Naive thymus-derived CD4-positive, alpha-beta T cell (primary cell): ENCODE measurements at regions of chr12 and their contacts with region 1.

Region 1: GRCh38 chr12:65169320-65170208 is at the start of gene LEMD3:
- DNase-seq: peak; percentile 87 to 97 (median 94)
- ATAC-seq: peak; percentile 95
- H3K4me3 ChIP-seq: peak within 1 kb of the TSS; percentile 84
- H3K4me3 Mint-ChIP-seq: peak within 1 kb of the TSS in 8 of 10 donors; percentile 92 to 100 (median 99)
- H3K27ac ChIP-seq: peak within 1 kb of the TSS; percentile 93
- H3K27ac Mint-ChIP-seq: peak within 1 kb of the TSS; percentile 94 to 100 (median 99)
- H3K4me1 ChIP-seq: peaks cover 33 to 40% of the 10 kb centered on the region in 2 donors
- H3K4me1 Mint-ChIP-seq: peaks cover 10 to 35% (median 23%) of the 10 kb centered on the region in 7 donors
- H3K27me3 ChIP-seq: no peaks in the 10 kb centered on the region
- H3K27me3 Mint-ChIP-seq: peaks cover 0 to 5% (median 2%) of the 10 kb centered on the region in 5 donors
- total RNA-seq, gene LEMD3: 37.8 to 60.1 (median 52.8) TPM

Region 2: DNA sequence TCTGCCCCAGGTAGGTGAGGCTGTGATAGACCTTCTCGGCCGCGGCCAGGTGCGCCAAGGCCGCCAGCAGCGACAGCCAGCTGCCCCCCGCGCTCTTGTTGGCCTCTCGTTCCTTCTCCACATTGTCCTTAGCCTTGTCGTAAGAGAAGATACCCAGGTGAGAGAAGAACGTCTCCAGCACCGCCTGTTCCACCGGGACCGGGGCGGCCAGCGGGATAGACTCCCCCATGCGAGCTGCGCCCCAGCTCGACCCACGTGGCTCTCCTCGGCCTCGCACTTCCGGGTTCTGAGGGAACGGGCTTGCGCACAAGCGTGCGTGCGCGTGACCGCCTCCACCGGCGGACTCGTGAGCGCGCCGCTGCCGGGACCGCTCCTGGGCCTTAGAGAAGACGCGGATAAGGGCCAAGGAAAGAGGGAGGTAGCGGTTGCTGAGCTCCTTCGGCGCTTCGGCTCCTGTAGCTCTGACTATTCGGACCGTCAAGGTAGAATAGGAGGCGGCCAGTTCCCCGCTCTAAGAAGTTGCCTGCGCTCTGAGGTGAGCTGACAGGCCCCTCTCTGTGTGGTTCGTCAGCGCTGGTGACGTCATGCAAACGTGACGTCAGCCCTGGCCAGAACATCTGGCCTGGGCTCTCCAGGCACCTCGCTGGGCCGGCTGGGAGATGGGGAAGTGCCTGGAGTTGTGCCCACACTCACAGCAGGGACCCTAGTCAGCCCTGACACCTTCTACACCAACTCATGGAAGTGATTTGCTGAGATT is 947.4 kb before region 1 on chr12 and contains the start of gene KICS2:
- CTCF ChIA-PET with region 1: no interaction called
- POLR2A ChIA-PET with region 1: interaction called, 4 read pairs
- intact Hi-C with region 1: loop called (anchors 1 to 10 kb)
- DNase-seq: peak; percentile 89 to 95 (median 93)
- ATAC-seq: peak; percentile 96
- H3K4me3 ChIP-seq: peak within 1 kb of the TSS; percentile 87
- H3K4me3 Mint-ChIP-seq: peak within 1 kb of the TSS; percentile 86 to 100 (median 98)
- H3K27ac ChIP-seq: peak within 1 kb of the TSS; percentile 92
- H3K27ac Mint-ChIP-seq: peak within 1 kb of the TSS; percentile 94 to 100 (median 98)
- H3K4me1 ChIP-seq: peaks cover 8 to 19% of the 10 kb centered on the region in 2 donors
- H3K4me1 Mint-ChIP-seq: peaks cover 17 to 51% (median 41%) of the 10 kb centered on the region in 7 donors
- H3K27me3 ChIP-seq: no peaks in the 10 kb centered on the region
- H3K27me3 Mint-ChIP-seq: peaks cover 0 to 21% (median 8%) of the 10 kb centered on the region in 5 donors
- total RNA-seq, gene KICS2: 11.7 to 26.9 (median 19.5) TPM

Region 3: GRCh38 chr12:64669270-64669842 is 500.2 kb before region 1 on chr12:
- CTCF ChIA-PET with region 1: no interaction called
- POLR2A ChIA-PET with region 1: no interaction called
- intact Hi-C with region 1: loop called in 1 of 2 experiments (anchors 1 kb)
- DNase-seq: peak; percentile 26 to 87 (median 84)
- ATAC-seq: peak; percentile 93
- H3K4me3 ChIP-seq: peak overlapping the region; percentile 52
- H3K4me3 Mint-ChIP-seq: peak overlapping the region; percentile 85 to 98 (median 92)
- H3K27ac ChIP-seq: peak overlapping the region; percentile 72
- H3K27ac Mint-ChIP-seq: peak overlapping the region; percentile 91 to 99 (median 97)
- H3K4me1 ChIP-seq: peaks cover 89 to 90% of the 10 kb centered on the region in 2 donors
- H3K4me1 Mint-ChIP-seq: peaks cover 65 to 98% (median 90%) of the 10 kb centered on the region in 7 donors
- H3K27me3 ChIP-seq: no peaks in the 10 kb centered on the region
- H3K27me3 Mint-ChIP-seq: no peaks in the 10 kb centered on the region

Region 4: GRCh38 chr12:65074932-65075331 is 94.6 kb before region 1 on chr12:
- CTCF ChIA-PET with region 1: no interaction called
- POLR2A ChIA-PET with region 1: no interaction called
- intact Hi-C with region 1: no loop called
- DNase-seq: no peak
- ATAC-seq: no peak
- H3K4me3 ChIP-seq: no peak overlapping the region
- H3K4me3 Mint-ChIP-seq: no peak overlapping the region
- H3K27ac ChIP-seq: no peak overlapping the region
- H3K27ac Mint-ChIP-seq: no peak overlapping the region
- H3K4me1 ChIP-seq: no peaks in the 10 kb centered on the region
- H3K4me1 Mint-ChIP-seq: no peaks in the 10 kb centered on the region
- H3K27me3 ChIP-seq: no peaks in the 10 kb centered on the region
- H3K27me3 Mint-ChIP-seq: peaks cover 13 to 61% (median 30%) of the 10 kb centered on the region in 5 donors

Region 5: DNA sequence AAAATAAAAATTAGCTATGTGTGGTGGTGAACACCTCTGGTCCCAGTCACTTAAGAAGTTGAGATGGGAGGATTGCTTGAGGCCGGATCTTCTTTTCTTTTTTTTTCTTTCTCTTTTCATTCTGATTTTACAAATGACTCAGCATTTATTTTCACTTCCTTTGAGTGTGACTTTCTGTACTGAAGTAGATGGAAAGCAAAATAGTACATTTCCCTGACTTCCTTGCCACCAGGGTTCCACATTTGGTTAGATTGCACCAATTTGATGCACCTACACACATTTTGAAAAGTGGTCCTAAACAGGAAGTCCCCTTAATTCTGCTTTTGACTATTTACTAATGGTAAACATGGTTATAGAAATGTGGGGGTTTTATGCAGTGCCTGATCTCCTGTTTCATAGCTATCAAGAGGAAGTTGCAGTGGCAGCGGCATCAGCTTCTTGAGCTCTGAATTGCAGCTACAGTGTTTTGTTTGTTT is 13.2 kb before region 1 on chr12:
- CTCF ChIA-PET with region 1: no interaction called
- POLR2A ChIA-PET with region 1: interaction called, 10 read pairs
- intact Hi-C with region 1: loop called in 1 of 2 experiments (anchors 1 kb)
- DNase-seq: peak in 6 of 9 donors; percentile 14 to 43 (median 26)
- ATAC-seq: peak; percentile 49
- H3K4me3 ChIP-seq: no peak overlapping the region
- H3K4me3 Mint-ChIP-seq: peak overlapping the region in 6 of 10 donors; percentile 4 to 53 (median 36)
- H3K27ac ChIP-seq: no peak overlapping the region
- H3K27ac Mint-ChIP-seq: peak overlapping the region in 6 of 9 donors; percentile 3 to 73 (median 37)
- H3K4me1 ChIP-seq: peaks cover 0 to 10% of the 10 kb centered on the region in 2 donors
- H3K4me1 Mint-ChIP-seq: peaks cover 6 to 16% (median 11%) of the 10 kb centered on the region in 7 donors
- H3K27me3 ChIP-seq: no peaks in the 10 kb centered on the region
- H3K27me3 Mint-ChIP-seq: peaks cover 12 to 27% (median 25%) of the 10 kb centered on the region in 5 donors

Region 6: DNA sequence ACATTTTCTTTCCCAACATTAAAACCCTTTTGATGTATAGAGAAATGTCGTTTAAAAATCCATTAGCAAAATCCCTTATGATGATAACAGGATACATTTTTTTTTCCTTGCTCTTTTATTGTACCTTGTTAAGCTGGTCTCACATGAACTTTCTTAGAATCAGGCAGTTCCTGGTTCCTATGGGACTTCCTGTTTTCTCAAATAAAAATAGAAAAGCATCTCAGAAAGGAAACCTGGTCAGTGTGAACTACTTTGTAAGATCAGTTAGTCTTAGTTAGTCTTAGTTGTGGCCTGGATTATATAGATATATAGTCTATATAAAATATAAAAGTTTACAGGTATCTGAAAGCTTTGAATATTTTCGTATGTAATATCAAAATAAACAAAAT is 40.1 kb after region 1 on chr12:
- CTCF ChIA-PET with region 1: no interaction called
- POLR2A ChIA-PET with region 1: interaction called, 5 read pairs
- intact Hi-C with region 1: loop called (anchors 1 to 2 kb)
- DNase-seq: peak in 1 of 9 donors; percentile 6
- ATAC-seq: peak; percentile 52
- H3K4me3 ChIP-seq: no peak overlapping the region
- H3K4me3 Mint-ChIP-seq: peak overlapping the region; percentile 30 to 87 (median 76)
- H3K27ac ChIP-seq: no peak overlapping the region
- H3K27ac Mint-ChIP-seq: peak overlapping the region; percentile 11 to 90 (median 80)
- H3K4me1 ChIP-seq: peaks cover 15 to 21% of the 10 kb centered on the region in 2 donors
- H3K4me1 Mint-ChIP-seq: peaks cover 33 to 73% (median 54%) of the 10 kb centered on the region in 7 donors
- H3K27me3 ChIP-seq: no peaks in the 10 kb centered on the region
- H3K27me3 Mint-ChIP-seq: no peaks in the 10 kb centered on the region

Region 7: GRCh38 chr12:66130277-66131066 is 960.9 kb after region 1 on chr12 and contains the start of gene LLPH:
- CTCF ChIA-PET with region 1: no interaction called
- POLR2A ChIA-PET with region 1: interaction called, 5 read pairs
- intact Hi-C with region 1: loop called (anchors 2 to 10 kb)
- DNase-seq: peak; percentile 72 to 88 (median 86)
- ATAC-seq: peak; percentile 97
- H3K4me3 ChIP-seq: peak within 1 kb of the TSS; percentile 99
- H3K4me3 Mint-ChIP-seq: peak within 1 kb of the TSS; percentile 92 to 98 (median 97)
- H3K27ac ChIP-seq: peak within 1 kb of the TSS; percentile 87
- H3K27ac Mint-ChIP-seq: peak within 1 kb of the TSS; percentile 95 to 99 (median 97)
- H3K4me1 ChIP-seq: peaks cover 19 to 23% of the 10 kb centered on the region in 2 donors
- H3K4me1 Mint-ChIP-seq: peaks cover 37 to 76% (median 63%) of the 10 kb centered on the region in 7 donors
- H3K27me3 ChIP-seq: no peaks in the 10 kb centered on the region
- H3K27me3 Mint-ChIP-seq: no peaks in the 10 kb centered on the region
- total RNA-seq, gene LLPH: 14.7 to 29.1 (median 28.4) TPM